GM12878 (cell line): ENCODE measurements at regions of chr17 and their contacts with region 1.

Region 1: GRCh38 chr17:29640413-29640812 is 17.7 kb upstream of the CORO6 start:
- DNase-seq: no peak
- ATAC-seq: no peak
- H3K4me3 ChIP-seq: no peak overlapping the region
- H3K27ac ChIP-seq: no peak overlapping the region
- H3K4me1 ChIP-seq: peaks cover 3% of the 10 kb centered on the region
- H3K27me3 ChIP-seq: no peaks in the 10 kb centered on the region
- CTCF ChIP-seq: no peak
- EP300 ChIP-seq: no peak
- POLR2A ChIP-seq: no peak
- RAD21 ChIP-seq: no peak

Region 2: GRCh38 chr17:29791336-29792080 is 151.1 kb after region 1 on chr17:
- CTCF ChIA-PET with region 1: interaction called, 14 read pairs
- POLR2A ChIA-PET with region 1: no interaction called
- RAD21 ChIA-PET with region 1: interaction called, 4 read pairs
- SMC1A ChIA-PET with region 1: interaction called, 5 read pairs
- in situ Hi-C with region 1: no loop called
- intact Hi-C with region 1: no loop called
- DNase-seq: no peak
- ATAC-seq: no peak
- H3K4me3 ChIP-seq: no peak overlapping the region
- H3K27ac ChIP-seq: no peak overlapping the region
- H3K4me1 ChIP-seq: no peaks in the 10 kb centered on the region
- H3K27me3 ChIP-seq: no peaks in the 10 kb centered on the region
- CTCF ChIP-seq: no peak
- EP300 ChIP-seq: no peak
- POLR2A ChIP-seq: no peak
- RAD21 ChIP-seq: no peak